IMR-90 (cell line): ENCODE measurements at regions of chr1 and their contacts with region 1.

Region 1: GRCh38 chr1:220655509-220655908 is 34.7 kb upstream of the C1orf115 start:
- DNase-seq: no peak
- ATAC-seq: no peak
- H3K4me3 ChIP-seq: no peak overlapping the region
- H3K27ac ChIP-seq: no peak overlapping the region
- H3K4me1 ChIP-seq: no peaks in the 10 kb centered on the region
- H3K27me3 ChIP-seq: peaks cover 2% of the 10 kb centered on the region
- CTCF ChIP-seq: no peak
- POLR2A ChIP-seq: no peak
- RAD21 ChIP-seq: no peak

Region 2: GRCh38 chr1:220516014-220516721 is 139.3 kb before region 1 on chr1:
- CTCF ChIA-PET with region 1: no interaction called
- POLR2A ChIA-PET with region 1: no interaction called
- dilution Hi-C with region 1: no loop called
- in situ Hi-C with region 1: no loop called
- intact Hi-C with region 1: loop called (anchors 5 kb)
- DNase-seq: no peak
- ATAC-seq: no peak
- H3K4me3 ChIP-seq: no peak overlapping the region
- H3K27ac ChIP-seq: no peak overlapping the region
- H3K4me1 ChIP-seq: no peaks in the 10 kb centered on the region
- H3K27me3 ChIP-seq: no peaks in the 10 kb centered on the region
- CTCF ChIP-seq: no peak
- POLR2A ChIP-seq: no peak
- RAD21 ChIP-seq: no peak